Sigmoid colon (tissue), 7 donors: ENCODE measurements at regions of chr2 and their contacts with region 1.

Region 1: GRCh38 chr2:3558205-3559014 is at the start of gene RNASEH1:
- DNase-seq: peak; percentile 99
- H3K4me3 ChIP-seq: peak within 1 kb of the TSS; percentile 76 to 97 (median 93)
- H3K27ac ChIP-seq: peak within 1 kb of the TSS; percentile 87 to 98 (median 94)
- H3K4me1 ChIP-seq: peaks cover 0 to 20% (median 17%) of the 10 kb centered on the region in 4 donors
- H3K27me3 ChIP-seq: no peaks in the 10 kb centered on the region
- CTCF ChIP-seq: no peak
- EP300 ChIP-seq: peak in 1 of 4 donors; percentile 65
- POLR2A ChIP-seq: peak; percentile 82 to 92
- total RNA-seq, gene RNASEH1: 20.5 to 28.4 (median 23.9) TPM

Region 2: DNA sequence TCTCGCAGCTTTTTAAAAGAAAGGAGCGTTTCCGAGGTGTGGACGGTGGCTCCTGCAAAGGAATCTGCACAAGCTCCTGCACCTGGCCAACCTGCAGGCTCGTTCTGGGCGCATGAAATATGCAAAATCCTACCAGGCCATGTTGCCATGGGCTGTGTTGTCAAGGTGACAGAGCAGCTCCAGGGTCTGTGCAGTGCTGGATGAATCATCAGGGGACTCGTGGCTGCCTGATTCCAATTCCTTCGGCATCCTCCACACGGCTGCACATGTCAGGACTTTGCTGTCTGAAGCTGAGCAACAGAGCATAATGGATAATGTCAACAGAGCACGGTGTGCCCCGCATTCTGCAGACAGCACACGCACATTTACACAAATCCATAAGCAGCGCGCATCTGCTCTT is 301.2 kb before region 1 on chr2:
- intact Hi-C with region 1: no loop called
- DNase-seq: no peak
- H3K4me3 ChIP-seq: no peak overlapping the region
- H3K27ac ChIP-seq: no peak overlapping the region
- H3K4me1 ChIP-seq: no peaks in the 10 kb centered on the region
- H3K27me3 ChIP-seq: no peaks in the 10 kb centered on the region
- CTCF ChIP-seq: no peak
- EP300 ChIP-seq: no peak
- POLR2A ChIP-seq: no peak

Region 3: DNA sequence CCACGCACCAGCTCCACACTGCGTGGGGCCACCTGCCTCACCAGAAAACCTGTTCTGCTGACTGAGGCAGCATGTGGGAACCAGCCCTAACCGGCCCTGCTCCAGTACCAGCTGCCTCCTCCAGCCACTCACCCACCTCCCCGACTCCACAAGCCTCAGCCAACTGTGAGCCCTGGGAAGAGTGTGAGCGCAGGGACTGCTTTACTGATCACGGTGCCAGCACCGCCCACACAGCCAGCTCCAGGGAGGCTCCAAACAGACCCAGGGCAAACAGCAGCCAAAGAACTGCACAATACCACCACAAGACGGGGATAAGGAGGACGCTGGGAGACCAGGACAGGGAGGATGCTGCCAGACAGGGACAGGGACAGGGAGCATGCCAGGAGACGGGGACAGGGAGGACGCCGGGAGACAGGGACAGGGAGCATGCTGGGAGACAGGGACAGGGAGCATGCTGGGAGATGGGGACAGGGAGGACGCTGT is 209.2 kb before region 1 on chr2:
- intact Hi-C with region 1: no loop called
- DNase-seq: no peak
- H3K4me3 ChIP-seq: no peak overlapping the region
- H3K27ac ChIP-seq: no peak overlapping the region
- H3K4me1 ChIP-seq: no peaks in the 10 kb centered on the region
- H3K27me3 ChIP-seq: no peaks in the 10 kb centered on the region
- CTCF ChIP-seq: no peak
- EP300 ChIP-seq: no peak
- POLR2A ChIP-seq: no peak

Region 4: DNA sequence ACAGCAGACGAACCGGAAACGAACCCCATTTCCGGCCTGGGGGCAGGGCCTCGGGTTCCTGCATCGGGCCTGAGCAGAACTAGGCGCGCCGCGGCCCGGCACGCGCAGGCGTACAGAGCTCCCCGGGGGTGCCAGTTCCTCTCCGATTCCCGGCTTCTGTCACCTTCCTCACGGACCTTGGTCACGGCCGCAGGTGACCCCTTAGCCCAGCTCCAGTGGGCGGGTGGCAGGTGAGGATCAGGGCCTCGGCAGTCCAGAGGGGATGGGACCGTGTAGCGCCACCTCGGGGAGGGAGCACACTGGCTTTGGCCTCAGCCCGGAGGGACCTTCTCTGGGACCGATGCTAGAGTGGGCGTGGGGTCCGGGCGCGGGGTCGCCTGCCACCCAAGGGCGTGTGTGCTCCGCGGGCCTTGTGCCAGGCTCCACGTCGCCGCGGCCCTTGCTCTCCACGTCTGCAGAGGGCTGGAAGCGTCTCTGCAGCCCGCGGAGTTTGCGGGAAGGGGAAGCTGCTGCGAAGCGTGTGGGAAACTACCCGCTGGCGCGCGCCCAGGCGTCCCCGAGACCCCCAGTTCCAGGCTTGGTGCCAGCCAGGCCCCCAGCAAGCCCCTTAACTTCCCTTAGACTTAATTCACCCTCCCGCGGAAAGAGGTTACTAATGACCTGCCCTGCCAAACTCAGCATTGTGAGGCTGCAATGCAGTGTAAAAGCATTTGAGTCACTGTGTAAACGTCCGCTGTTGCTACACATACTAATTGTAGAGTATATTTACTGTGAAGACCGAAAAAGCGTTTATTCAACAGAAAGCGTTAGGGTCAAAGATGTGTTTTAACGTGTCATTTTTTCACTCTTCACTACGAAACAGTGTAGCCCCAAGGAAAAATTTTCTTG is 178.5 kb before region 1 on chr2 and contains the start of gene TRAPPC12:
- intact Hi-C with region 1: loop called (anchors 2 kb)
- DNase-seq: peak; percentile 95
- H3K4me3 ChIP-seq: peak within 1 kb of the TSS; percentile 66 to 81 (median 72)
- H3K27ac ChIP-seq: peak within 1 kb of the TSS; percentile 88 to 94 (median 92)
- H3K4me1 ChIP-seq: peaks cover 0 to 37% (median 30%) of the 10 kb centered on the region in 4 donors
- H3K27me3 ChIP-seq: no peaks in the 10 kb centered on the region
- CTCF ChIP-seq: peak in 2 of 4 experiments; percentile 20 to 21
- EP300 ChIP-seq: no peak
- POLR2A ChIP-seq: peak; percentile 71 to 76
- total RNA-seq, gene TRAPPC12: 48.5 to 79.5 (median 63.4) TPM

Region 5: DNA sequence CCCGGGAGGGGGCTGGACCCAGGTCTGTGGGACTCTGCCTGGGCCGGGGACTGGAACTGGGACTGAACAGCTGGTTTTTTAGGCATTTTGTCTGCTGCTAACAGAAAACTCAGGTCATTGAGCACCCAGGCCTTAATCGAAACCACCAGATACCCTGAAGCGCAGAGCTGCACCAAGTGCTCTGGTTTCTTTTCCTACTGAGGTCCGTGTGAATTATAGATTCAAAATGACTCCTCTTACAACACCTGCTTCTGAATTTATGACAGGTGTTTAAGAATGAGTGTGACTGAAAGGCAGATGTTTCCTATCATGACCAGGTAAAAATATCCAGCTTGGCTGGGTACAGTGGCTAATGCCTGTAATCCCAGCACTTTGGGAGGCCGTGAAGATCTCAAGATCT is 131.1 kb before region 1 on chr2:
- intact Hi-C with region 1: no loop called
- DNase-seq: no peak
- H3K4me3 ChIP-seq: no peak overlapping the region
- H3K27ac ChIP-seq: no peak overlapping the region
- H3K4me1 ChIP-seq: no peaks in the 10 kb centered on the region
- H3K27me3 ChIP-seq: no peaks in the 10 kb centered on the region
- CTCF ChIP-seq: no peak
- EP300 ChIP-seq: no peak
- POLR2A ChIP-seq: no peak

Region 6: DNA sequence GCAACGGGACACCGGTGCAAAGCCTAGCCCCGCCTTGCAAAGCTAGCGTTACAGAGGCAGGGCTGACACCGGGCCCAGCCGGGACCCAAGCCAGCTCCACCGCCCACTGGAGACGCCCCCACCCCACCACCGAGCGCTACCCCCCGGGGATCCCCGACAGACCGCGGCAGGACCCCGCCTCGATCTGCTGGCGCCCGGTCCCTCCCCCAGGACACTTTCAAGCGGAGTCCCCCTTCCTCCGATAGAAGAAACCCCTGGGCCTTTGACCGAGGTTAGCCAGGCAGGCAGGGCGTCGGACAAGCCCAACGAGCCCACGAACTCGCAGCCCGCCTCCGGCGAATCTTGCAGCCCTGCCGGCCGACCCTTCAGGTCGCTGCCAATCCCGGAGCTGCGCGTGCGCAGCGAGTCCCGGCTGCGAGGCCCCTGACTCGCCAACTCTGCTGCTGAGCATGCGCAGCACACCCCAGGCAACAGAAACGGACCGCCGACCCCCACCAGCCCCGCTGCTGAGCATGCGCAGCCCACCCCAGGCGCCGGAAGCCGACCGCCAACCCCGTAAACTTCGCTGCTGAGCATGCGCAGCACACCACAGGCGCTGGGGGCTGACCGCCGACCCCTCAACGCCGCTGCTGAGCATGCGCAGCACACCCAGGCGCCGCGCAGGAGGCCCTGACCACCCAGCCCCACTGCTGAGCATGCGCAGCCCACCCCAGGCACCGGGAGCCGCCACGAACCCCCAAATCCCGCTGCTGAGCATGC is 39.7 kb before region 1 on chr2:
- intact Hi-C with region 1: loop called (anchors 2 kb)
- DNase-seq: peak; percentile 99
- H3K4me3 ChIP-seq: peak overlapping the region; percentile 73 to 95 (median 93)
- H3K27ac ChIP-seq: peak overlapping the region; percentile 96 to 100 (median 98)
- H3K4me1 ChIP-seq: peaks cover 0 to 53% (median 44%) of the 10 kb centered on the region in 4 donors
- H3K27me3 ChIP-seq: no peaks in the 10 kb centered on the region
- CTCF ChIP-seq: no peak
- EP300 ChIP-seq: peak in 1 of 4 donors; percentile 45
- POLR2A ChIP-seq: peak; percentile 37 to 46

Region 7: GRCh38 chr2:3536682-3537632 is 21.5 kb before region 1 on chr2:
- intact Hi-C with region 1: loop called (anchors 2 kb)
- DNase-seq: peak; percentile 84
- H3K4me3 ChIP-seq: peak overlapping the region; percentile 26 to 49 (median 46)
- H3K27ac ChIP-seq: peak overlapping the region; percentile 89 to 97 (median 91)
- H3K4me1 ChIP-seq: peaks cover 0 to 44% (median 33%) of the 10 kb centered on the region in 4 donors
- H3K27me3 ChIP-seq: no peaks in the 10 kb centered on the region
- CTCF ChIP-seq: peak in 3 of 4 experiments; percentile 22 to 56 (median 48)
- EP300 ChIP-seq: no peak
- POLR2A ChIP-seq: no peak

Region 8: DNA sequence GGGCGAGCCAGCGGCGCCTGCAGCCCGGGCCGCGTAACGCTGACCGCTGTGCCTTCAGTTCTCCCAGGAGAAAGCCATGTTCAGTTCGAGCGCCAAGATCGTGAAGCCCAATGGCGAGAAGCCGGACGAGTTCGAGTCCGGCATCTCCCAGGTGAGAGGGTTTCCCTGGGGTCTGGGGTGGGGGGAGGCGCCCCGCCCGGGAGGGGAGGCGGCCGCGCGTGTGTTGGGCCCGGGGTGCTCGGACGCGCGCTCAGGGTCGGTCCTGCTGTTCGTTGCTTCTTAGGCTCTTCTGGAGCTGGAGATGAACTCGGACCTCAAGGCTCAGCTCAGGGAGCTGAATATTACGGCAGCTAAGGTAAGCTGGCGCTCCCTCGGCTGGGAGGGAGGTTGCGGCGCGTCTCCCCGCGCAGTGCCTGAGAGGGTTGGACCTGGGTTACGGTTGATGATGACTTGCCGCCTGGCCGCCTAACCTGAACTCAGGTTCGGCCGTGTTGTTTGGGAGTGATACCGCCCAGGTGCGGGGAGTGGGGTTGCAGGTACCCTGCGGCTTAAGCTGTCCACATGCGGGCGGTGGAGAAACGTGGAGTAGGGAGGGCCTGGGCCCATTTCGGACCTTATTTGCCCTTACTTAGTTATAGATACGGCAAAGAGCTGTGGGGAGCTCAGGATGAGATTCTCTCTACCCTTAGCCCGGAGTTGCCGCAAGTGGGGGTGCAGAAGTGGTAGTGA is 17.3 kb after region 1 on chr2:
- intact Hi-C with region 1: loop called (anchors 1 kb)
- DNase-seq: no peak
- H3K4me3 ChIP-seq: peak overlapping the region; percentile 84 to 91 (median 86)
- H3K27ac ChIP-seq: peak overlapping the region; percentile 87 to 95 (median 90)
- H3K4me1 ChIP-seq: peaks cover 0 to 44% (median 38%) of the 10 kb centered on the region in 4 donors
- H3K27me3 ChIP-seq: no peaks in the 10 kb centered on the region
- CTCF ChIP-seq: no peak
- EP300 ChIP-seq: no peak
- POLR2A ChIP-seq: no peak

Region 9: DNA sequence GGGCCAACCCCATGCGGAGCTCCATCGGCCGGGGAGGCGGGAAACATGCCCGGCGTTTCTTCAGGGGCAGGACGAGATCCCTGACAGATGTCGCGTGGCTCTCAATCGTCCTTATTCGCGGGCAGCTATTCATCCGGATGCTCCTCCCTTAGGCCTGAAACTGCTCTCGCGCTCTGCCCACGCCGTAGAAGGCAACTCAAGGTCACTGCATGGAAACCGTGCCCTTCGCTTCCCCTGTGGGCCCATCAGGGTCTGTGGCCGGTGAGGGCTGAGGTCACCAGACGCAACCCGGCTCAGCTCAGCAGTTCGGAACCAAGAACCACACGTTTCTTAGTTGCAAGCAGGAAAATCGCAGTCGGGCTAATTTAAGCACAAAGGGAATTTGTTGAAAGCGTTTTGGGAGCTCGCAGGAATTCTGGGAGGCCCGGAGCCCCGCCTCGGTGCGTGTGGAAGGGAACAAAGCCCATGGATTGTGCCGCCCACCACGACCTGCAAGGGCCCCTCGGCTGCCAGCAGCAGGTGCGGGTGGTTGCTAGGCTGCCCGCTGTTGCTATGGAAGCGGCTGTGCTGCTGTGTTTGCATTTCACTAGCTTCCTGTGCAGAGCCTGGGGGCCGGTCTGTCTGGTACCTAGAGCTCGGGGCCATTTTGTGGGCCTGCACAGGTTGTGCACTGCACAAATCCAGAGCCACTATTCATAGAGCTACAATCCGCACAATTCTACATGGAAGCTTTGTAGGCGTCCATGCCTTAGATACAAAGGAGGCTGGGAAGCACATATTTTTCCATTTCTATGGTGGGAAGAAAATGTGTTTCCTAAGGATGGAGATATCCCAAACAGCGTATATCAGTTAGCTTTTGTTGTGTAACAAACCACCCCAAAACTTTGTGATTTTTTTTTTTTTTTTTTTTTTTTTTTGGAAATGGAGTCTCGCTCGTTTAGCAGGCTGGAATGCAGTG is 93.6 kb after region 1 on chr2:
- intact Hi-C with region 1: loop called (anchors 5 kb)
- DNase-seq: no peak
- H3K4me3 ChIP-seq: peak overlapping the region in 3 of 4 donors; percentile 28 to 42 (median 41)
- H3K27ac ChIP-seq: peak overlapping the region; percentile 74 to 84 (median 79)
- H3K4me1 ChIP-seq: peaks cover 0 to 19% (median 14%) of the 10 kb centered on the region in 4 donors
- H3K27me3 ChIP-seq: no peaks in the 10 kb centered on the region
- CTCF ChIP-seq: no peak
- EP300 ChIP-seq: no peak
- POLR2A ChIP-seq: no peak